ENCODE measurements at regions of chr1 and their contacts with region 1.

Region 1: DNA sequence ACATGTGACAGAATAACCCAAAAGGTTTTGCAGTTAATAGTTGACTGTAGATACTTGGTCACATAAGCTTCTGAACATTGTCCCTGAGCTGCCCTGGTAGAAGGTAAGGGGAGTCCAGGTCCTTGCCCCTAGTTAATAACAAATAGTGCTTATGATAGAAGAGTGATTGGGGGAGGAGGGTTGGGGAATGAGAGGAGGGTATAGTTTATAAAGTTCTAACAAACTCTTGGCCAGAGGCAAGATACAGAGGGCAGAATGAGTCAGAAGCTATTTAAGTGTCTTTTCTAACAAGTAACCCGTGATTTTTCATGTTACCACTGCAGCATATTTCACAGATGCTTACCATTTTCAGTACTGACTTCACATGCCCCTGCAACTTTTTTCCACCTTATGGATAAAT is 26.7 kb upstream of the MYOCOS start:
- DNase-seq: no peak
- H3K4me3 ChIP-seq: no peak overlapping the region
- H3K27ac ChIP-seq: no peak overlapping the region
- H3K4me1 ChIP-seq: no peaks in the 10 kb centered on the region
- H3K27me3 ChIP-seq: no peaks in the 10 kb centered on the region
- CTCF ChIP-seq: no peak
- EP300 ChIP-seq: no peak
- POLR2A ChIP-seq: no peak
- RAD21 ChIP-seq: no peak

Region 2: DNA sequence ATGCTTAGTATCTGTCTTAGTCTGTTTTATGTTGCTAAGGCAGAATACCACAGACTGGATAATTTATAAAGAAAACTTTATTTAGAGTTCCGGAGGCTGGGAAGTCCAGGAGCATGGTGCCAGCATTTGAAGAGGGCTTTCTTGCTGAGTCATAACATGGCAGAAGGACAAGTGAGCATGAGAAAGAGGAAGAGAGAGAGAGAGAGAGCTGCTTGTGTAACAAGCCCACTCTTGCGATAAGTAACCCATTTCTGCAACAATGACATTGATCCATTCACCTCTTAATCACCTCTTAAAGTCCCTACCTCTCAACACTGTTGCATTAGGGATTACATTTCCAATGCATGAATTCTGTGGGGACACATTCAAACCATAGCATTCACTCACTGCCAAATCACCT is 15.1 kb after region 1 on chr1:
- CTCF ChIA-PET with region 1: no interaction called
- POLR2A ChIA-PET with region 1: interaction called, 10 read pairs
- DNase-seq: no peak
- H3K4me3 ChIP-seq: no peak overlapping the region
- H3K27ac ChIP-seq: no peak overlapping the region
- H3K4me1 ChIP-seq: no peaks in the 10 kb centered on the region
- H3K27me3 ChIP-seq: no peaks in the 10 kb centered on the region
- CTCF ChIP-seq: no peak
- EP300 ChIP-seq: no peak
- POLR2A ChIP-seq: no peak
- RAD21 ChIP-seq: no peak

Region 3: DNA sequence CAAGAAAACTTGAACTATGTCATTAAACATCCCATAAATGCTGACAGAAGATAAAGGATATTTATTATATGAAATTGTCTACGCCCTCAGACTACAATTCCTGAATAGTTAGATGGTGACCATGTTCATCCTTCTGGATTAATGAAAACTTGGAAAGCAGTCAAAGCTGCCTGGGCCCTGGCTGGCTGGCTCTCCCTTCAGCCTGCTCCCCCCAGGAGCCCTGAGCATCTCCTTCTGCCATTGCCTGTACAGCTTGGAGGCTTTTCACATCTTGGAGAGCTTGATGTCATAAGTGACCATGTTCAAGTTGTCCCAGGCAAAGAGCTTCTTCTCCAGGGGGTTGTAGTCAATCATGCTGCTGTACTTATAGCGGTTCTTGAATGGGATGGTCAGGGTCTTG is 40.3 kb after region 1 on chr1:
- CTCF ChIA-PET with region 1: no interaction called
- POLR2A ChIA-PET with region 1: no interaction called
- DNase-seq: no peak
- H3K4me3 ChIP-seq: no peak overlapping the region
- H3K27ac ChIP-seq: no peak overlapping the region
- H3K4me1 ChIP-seq: peaks cover 0 to under 1% (median 0%) of the 10 kb centered on the region in 4 experiments; a peak in 2 of 7 replicates
- H3K27me3 ChIP-seq: no peaks in the 10 kb centered on the region
- CTCF ChIP-seq: no peak
- EP300 ChIP-seq: no peak
- POLR2A ChIP-seq: no peak
- RAD21 ChIP-seq: no peak